ENCODE measurements at regions of chr15 and their contacts with region 1.

Region 1: DNA sequence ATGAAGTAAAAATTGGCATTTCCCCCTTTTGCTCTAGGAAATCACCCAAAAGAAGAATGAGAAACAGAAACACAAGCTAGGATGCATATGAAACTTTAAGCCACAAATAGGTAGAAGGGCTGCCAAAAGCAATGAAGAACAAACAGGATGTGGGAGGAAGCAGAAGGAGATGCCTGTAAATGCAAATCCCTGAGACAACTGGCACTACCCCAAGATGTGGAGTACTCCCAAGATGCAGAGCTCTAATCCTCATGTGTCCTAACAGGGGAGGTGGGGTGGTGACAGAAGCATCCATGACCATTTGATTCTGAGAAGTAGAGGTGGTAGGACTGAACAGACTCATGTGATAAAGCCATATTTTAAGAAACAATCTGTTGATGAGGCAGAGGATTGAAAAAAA is 31.9 kb upstream of the ZNF280D start:
- DNase-seq: no peak
- ATAC-seq: no peak
- H3K4me3 ChIP-seq: no peak overlapping the region
- H3K4me3 Mint-ChIP-seq: no peak overlapping the region
- H3K27ac ChIP-seq: no peak overlapping the region
- H3K27ac Mint-ChIP-seq: no peak overlapping the region
- H3K4me1 ChIP-seq: no peaks in the 10 kb centered on the region
- H3K4me1 Mint-ChIP-seq: peaks cover 8% of the 10 kb centered on the region
- H3K27me3 ChIP-seq: no peaks in the 10 kb centered on the region
- H3K27me3 Mint-ChIP-seq: no peaks in the 10 kb centered on the region
- CTCF ChIP-seq: no peak

Region 2: GRCh38 chr15:56719774-56720555 is 45.3 kb before region 1 on chr15:
- CTCF ChIA-PET with region 1: no interaction called
- POLR2A ChIA-PET with region 1: no interaction called
- intact Hi-C with region 1: loop called in 1 of 2 experiments (anchors 10 kb)
- DNase-seq: no peak
- ATAC-seq: no peak
- H3K4me3 ChIP-seq: no peak overlapping the region
- H3K4me3 Mint-ChIP-seq: no peak overlapping the region
- H3K27ac ChIP-seq: no peak overlapping the region
- H3K27ac Mint-ChIP-seq: no peak overlapping the region
- H3K4me1 ChIP-seq: no peaks in the 10 kb centered on the region
- H3K4me1 Mint-ChIP-seq: peaks cover 74% of the 10 kb centered on the region
- H3K27me3 ChIP-seq: no peaks in the 10 kb centered on the region
- H3K27me3 Mint-ChIP-seq: no peaks in the 10 kb centered on the region
- CTCF ChIP-seq: no peak

Region 3: DNA sequence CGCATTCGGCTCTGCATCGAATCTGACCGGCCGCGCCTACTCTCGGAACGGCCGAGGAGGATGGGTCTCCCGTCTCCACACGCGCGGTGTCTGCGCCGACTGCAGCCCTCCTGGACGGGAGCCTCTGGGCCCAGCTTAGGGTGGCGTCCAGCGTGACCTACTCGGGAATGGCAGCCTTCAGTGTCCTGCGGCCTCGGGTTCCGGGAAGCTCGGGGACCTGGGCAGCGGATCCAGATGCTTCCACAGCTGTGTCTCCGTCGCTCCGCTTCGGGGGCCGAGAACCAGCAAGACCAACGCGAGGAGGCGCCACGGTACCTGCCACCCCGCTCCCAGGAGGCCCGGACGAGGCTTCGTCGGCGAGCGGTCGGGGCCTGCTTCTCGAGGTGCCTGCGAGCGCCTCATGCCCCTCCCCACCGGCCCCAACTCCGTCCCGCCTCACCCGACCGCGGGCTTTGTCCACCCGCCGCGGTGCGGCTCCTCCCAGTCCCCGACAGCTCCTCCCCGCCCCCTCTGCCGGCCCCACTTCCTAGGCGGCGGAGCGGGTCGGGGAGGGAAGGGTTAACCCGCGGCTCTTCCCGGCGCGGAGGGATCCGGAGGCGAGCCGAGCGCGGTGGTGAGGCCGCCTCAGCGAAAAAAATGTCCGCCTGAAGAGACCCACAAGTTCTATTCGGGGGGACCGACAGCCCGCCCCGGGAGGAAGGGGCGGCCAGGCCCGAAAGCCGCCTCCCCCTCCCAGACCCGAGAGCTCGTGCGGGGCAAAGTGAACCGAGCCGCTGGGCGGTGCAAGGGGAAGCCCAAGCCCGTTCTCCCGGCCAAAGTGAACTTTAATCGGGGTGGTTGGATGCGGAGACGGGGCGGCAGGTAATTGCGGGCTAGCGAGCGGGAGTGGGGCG is 153.0 kb after region 1 on chr15 and contains the start of gene TCF12:
- CTCF ChIA-PET with region 1: no interaction called
- POLR2A ChIA-PET with region 1: no interaction called
- intact Hi-C with region 1: no loop called
- DNase-seq: peak; percentile 78 to 95 (median 84)
- ATAC-seq: peak; percentile 75
- H3K4me3 ChIP-seq: peak within 1 kb of the TSS; percentile 82
- H3K4me3 Mint-ChIP-seq: peak within 1 kb of the TSS; percentile 95
- H3K27ac ChIP-seq: peak within 1 kb of the TSS; percentile 68 to 71
- H3K27ac Mint-ChIP-seq: peak within 1 kb of the TSS; percentile 91
- H3K4me1 ChIP-seq: peaks cover 28% of the 10 kb centered on the region
- H3K4me1 Mint-ChIP-seq: peaks cover 49% of the 10 kb centered on the region
- H3K27me3 ChIP-seq: no peaks in the 10 kb centered on the region
- H3K27me3 Mint-ChIP-seq: no peaks in the 10 kb centered on the region
- CTCF ChIP-seq: peak; percentile 56
- total RNA-seq, gene TCF12: 54.0 TPM